HepG2 (cell line): ENCODE measurements at regions of chr21 and their contacts with region 1.

Region 1: GRCh38 chr21:14877570-14878228 is 187.1 kb downstream of the NRIP1 start:
- DNase-seq: peak; percentile 96
- ATAC-seq: peak; percentile 70
- H3K4me3 ChIP-seq: peak overlapping the region in 1 of 3 experiments; percentile 15; a peak in 1 of 6 replicates
- H3K27ac ChIP-seq: peak overlapping the region; percentile 96
- H3K4me1 ChIP-seq: peaks cover 77% of the 10 kb centered on the region
- H3K27me3 ChIP-seq: no peaks in the 10 kb centered on the region
- CTCF ChIP-seq: no peak
- EP300 ChIP-seq: peak; percentile 54 to 96
- POLR2A ChIP-seq: no peak
- RAD21 ChIP-seq: no peak

Region 2: DNA sequence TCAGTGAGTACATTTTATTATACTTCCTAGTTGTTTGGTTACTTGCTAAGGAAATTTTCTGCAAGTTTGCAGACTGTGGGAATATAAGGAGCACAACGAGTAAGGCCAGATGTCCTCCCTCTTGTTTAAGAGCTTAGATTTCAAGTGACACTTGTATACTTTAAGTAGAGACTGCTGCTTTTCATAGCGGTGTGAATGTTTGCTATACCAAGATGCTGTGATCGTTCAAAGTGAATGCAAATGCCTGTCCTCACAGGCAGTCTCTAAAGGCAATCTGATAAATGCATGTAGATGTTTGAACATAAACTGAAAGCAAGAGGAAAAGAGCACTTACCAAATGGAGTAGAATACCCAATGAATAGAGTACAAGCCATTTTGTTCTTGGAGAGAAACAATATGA is 39.3 kb before region 1 on chr21:
- CTCF ChIA-PET with region 1: no interaction called
- POLR2A ChIA-PET with region 1: no interaction called
- in situ Hi-C with region 1: no loop called
- intact Hi-C with region 1: no loop called
- DNase-seq: no peak
- ATAC-seq: no peak
- H3K4me3 ChIP-seq: no peak overlapping the region
- H3K27ac ChIP-seq: no peak overlapping the region
- H3K4me1 ChIP-seq: no peaks in the 10 kb centered on the region
- H3K27me3 ChIP-seq: no peaks in the 10 kb centered on the region
- CTCF ChIP-seq: no peak
- EP300 ChIP-seq: no peak
- POLR2A ChIP-seq: no peak
- RAD21 ChIP-seq: no peak

Region 3: DNA sequence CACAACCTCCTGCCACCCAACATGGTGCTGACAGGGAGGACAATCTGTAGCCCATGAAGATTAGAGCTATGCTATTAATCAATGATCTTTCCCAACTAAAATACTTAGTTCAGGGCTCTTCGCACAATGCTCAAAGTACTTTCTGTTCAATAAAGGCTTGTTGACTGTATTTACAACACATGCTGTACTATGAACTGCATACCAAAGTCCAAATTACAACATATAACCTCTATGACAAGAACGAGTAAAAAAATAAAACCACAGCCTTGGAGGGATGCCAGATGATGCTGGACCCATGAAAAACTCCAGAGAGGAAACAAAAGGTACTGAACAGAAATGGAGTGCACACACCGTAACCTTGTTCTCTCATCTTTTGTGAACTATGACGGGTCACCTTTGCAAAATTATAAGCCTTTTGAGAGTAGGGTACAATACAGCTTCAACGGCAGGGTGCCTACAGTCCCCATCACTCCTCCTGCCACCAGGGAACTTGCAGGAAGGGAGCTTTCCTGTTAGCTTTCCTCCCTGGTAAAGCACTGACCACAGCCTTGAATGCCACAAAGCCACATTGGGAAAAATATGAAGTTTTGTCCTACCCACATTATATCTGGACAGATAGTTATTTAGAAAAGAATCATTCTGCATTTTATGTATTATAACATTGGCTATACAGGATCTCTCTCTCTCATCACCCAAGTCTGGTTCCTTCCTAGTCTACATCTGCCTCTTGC is 11.5 kb after region 1 on chr21:
- CTCF ChIA-PET with region 1: no interaction called
- POLR2A ChIA-PET with region 1: interaction called, 82 read pairs
- in situ Hi-C with region 1: no loop called
- intact Hi-C with region 1: loop called (anchors 1 kb)
- DNase-seq: peak; percentile 92
- ATAC-seq: peak; percentile 91
- H3K4me3 ChIP-seq: peak overlapping the region in 1 of 3 experiments; percentile 18; a peak in 1 of 6 replicates
- H3K27ac ChIP-seq: peak overlapping the region; percentile 83
- H3K4me1 ChIP-seq: peaks cover 39% of the 10 kb centered on the region
- H3K27me3 ChIP-seq: no peaks in the 10 kb centered on the region
- CTCF ChIP-seq: no peak
- EP300 ChIP-seq: peak; percentile 97 to 98
- POLR2A ChIP-seq: no peak
- RAD21 ChIP-seq: 0 out of 2 replicates have a peak, but pooled peaks have one; percentile 31

Region 4: DNA sequence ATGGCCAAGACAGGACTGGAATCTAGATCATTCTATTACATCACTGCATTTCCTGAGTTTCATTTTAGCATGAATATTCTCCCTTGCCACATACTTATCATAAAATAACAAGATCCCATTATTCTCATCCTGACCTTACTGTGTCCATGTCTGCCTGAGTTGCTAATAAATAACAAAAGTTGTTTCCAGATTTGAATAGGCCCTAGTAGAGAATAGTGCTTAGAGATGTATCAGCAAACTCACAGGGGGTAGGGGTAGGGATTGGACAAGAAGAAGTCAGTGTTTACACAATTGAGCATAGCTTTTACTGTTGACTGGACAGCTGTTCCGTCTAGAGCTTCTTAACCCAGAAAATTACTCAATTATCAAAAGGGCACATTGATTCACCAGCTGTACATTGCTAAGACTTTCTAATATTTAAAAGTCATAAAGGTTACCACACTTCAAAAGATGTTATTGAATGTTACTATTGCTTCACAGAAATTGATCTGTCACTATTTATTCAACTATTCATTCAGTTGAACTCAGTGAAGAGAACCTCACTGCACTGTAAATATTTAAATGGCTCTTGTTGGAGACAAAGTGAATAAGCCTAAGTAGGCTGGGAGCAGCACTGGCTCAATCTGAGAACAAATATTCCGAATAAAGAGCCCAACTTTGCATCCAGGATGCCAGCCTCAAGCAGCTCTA is 65.2 kb after region 1 on chr21:
- CTCF ChIA-PET with region 1: interaction called, 4 read pairs
- POLR2A ChIA-PET with region 1: interaction called, 8 read pairs
- in situ Hi-C with region 1: no loop called
- intact Hi-C with region 1: loop called (anchors 2 kb)
- DNase-seq: peak; percentile 91
- ATAC-seq: peak; percentile 96
- H3K4me3 ChIP-seq: no peak overlapping the region; a peak in 1 of 6 replicates
- H3K27ac ChIP-seq: peak overlapping the region; percentile 71
- H3K4me1 ChIP-seq: peaks cover 55% of the 10 kb centered on the region
- H3K27me3 ChIP-seq: no peaks in the 10 kb centered on the region
- CTCF ChIP-seq: no peak
- EP300 ChIP-seq: peak; percentile 62 to 97
- POLR2A ChIP-seq: no peak
- RAD21 ChIP-seq: no peak